B cell (primary cell): ENCODE measurements at regions of chr14 and their contacts with region 1.

Region 1: GRCh38 chr14:67571272-67571850 is 28.7 kb downstream of the PIGH start:
- DNase-seq: peak; percentile 80
- ATAC-seq: peak; percentile 89
- H3K4me3 ChIP-seq: no peak overlapping the region
- H3K4me3 Mint-ChIP-seq: no peak overlapping the region
- H3K27ac ChIP-seq: no peak overlapping the region
- H3K27ac Mint-ChIP-seq: peak overlapping the region; percentile 1
- H3K4me1 ChIP-seq: no peaks in the 10 kb centered on the region
- H3K4me1 Mint-ChIP-seq: no peaks in the 10 kb centered on the region
- H3K27me3 ChIP-seq: no peaks in the 10 kb centered on the region
- H3K27me3 Mint-ChIP-seq: peaks cover 5% of the 10 kb centered on the region
- CTCF ChIP-seq: peak; percentile 83

Region 2: GRCh38 chr14:67335781-67336180 is 235.6 kb before region 1 on chr14:
- CTCF ChIA-PET with region 1: no interaction called
- POLR2A ChIA-PET with region 1: no interaction called
- intact Hi-C with region 1: no loop called
- DNase-seq: peak; percentile 31
- ATAC-seq: no peak
- H3K4me3 ChIP-seq: no peak overlapping the region
- H3K4me3 Mint-ChIP-seq: no peak overlapping the region
- H3K27ac ChIP-seq: no peak overlapping the region
- H3K27ac Mint-ChIP-seq: no peak overlapping the region
- H3K4me1 ChIP-seq: no peaks in the 10 kb centered on the region
- H3K4me1 Mint-ChIP-seq: no peaks in the 10 kb centered on the region
- H3K27me3 ChIP-seq: no peaks in the 10 kb centered on the region
- H3K27me3 Mint-ChIP-seq: no peaks in the 10 kb centered on the region
- CTCF ChIP-seq: peak; percentile 51

Region 3: DNA sequence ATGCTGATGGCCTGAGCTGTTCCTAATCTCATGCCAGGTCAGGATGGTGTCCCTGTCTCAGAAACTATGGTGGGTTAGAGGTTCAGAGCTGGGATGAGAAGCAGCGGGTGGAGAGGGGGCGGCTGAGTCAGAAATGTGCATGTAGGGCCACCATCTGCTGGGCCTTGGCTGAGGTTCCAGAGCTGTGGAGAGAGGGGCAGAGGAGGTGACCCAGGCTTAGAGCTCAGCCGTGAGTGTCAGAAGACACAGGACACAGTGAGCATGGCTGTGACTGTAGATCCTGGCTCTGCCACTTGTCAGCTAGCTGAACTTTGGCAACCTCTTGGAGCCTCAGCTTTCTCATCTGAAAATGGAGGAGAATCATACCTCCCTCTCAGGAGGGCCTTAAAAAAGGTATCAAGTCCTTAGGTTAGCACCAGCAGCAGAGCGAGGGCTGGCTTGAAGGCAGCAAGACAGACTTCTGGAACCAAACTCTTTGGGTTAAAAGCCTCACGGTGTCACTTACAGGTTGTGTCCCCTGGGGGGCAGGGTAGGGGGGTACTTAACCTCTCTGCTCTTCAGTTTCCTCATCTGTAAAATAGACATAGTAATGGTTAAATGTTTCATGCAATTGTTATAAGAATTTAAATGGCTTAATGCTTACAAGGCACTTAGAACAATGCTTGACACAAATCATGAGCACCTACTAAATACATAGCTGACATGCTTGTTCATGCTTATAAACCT is 117.6 kb before region 1 on chr14:
- CTCF ChIA-PET with region 1: interaction called, 14 read pairs
- POLR2A ChIA-PET with region 1: no interaction called
- intact Hi-C with region 1: no loop called
- DNase-seq: no peak
- ATAC-seq: no peak
- H3K4me3 ChIP-seq: no peak overlapping the region
- H3K4me3 Mint-ChIP-seq: no peak overlapping the region
- H3K27ac ChIP-seq: no peak overlapping the region
- H3K27ac Mint-ChIP-seq: no peak overlapping the region
- H3K4me1 ChIP-seq: no peaks in the 10 kb centered on the region
- H3K4me1 Mint-ChIP-seq: no peaks in the 10 kb centered on the region
- H3K27me3 ChIP-seq: no peaks in the 10 kb centered on the region
- H3K27me3 Mint-ChIP-seq: peaks cover 11% of the 10 kb centered on the region
- CTCF ChIP-seq: no peak

Region 4: DNA sequence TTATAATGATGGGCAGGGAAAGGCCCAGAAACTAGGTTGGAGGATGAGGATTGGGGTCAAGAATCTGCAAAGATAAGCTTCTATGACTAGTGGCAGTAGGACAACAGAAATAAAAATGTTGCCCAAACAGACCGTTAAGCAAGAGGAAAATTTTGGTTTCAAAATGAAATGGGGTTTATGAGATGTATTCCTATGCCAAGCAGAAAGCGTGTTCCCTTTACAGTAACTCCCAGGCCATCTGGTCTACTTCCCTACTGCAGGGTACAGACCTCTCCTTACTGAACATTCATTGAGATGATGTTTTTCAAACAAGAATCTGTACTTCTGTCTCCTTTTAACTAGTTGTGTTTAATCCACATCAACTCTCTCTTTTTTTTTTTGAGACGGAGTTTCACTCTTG is 62.4 kb before region 1 on chr14:
- CTCF ChIA-PET with region 1: interaction called, 17 read pairs
- POLR2A ChIA-PET with region 1: no interaction called
- intact Hi-C with region 1: no loop called
- DNase-seq: no peak
- ATAC-seq: no peak
- H3K4me3 ChIP-seq: no peak overlapping the region
- H3K4me3 Mint-ChIP-seq: no peak overlapping the region
- H3K27ac ChIP-seq: no peak overlapping the region
- H3K27ac Mint-ChIP-seq: no peak overlapping the region
- H3K4me1 ChIP-seq: peaks cover 15 to 16% of the 10 kb centered on the region in 2 donors
- H3K4me1 Mint-ChIP-seq: peaks cover 27% of the 10 kb centered on the region
- H3K27me3 ChIP-seq: no peaks in the 10 kb centered on the region
- H3K27me3 Mint-ChIP-seq: no peaks in the 10 kb centered on the region
- CTCF ChIP-seq: no peak

Region 5: DNA sequence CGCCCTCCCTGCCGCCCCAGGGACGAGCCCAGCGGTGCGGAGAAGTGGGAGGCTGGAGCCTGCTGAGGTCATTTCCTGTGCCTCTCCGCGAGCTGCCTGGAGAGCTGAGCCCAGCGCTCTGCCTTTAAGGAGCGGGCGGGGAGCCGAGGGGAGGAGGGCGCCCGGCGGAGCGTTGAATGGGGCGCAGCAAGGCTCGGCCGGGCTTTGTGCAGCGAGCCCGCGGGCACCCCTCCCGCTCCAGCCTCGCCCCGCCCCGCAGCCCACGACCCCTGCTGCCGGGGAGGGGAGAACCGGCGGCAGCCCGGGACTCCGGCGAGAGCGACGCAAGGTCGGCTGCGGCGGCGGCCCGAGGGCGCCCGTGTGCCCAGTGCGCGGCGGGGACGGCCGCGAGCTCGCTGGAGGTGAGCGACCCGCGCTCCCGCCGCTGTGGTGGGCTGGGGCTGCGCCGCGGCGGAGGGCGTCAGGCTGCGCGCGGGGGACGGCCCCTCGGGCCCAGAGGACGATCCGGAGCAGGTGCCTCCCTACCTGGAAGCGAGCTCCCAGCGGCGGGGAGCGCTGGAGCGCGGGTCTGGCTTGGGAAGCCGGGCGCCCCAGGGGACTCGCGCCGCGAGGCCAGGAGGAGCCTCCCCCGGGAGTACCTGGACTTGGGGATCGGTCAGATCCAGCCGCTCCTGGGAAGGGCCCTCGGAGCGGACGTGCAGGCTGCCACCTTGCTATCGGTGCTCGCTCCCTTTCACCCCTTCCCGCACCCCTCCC is 38.2 kb before region 1 on chr14 and contains the start of gene PLEKHH1:
- CTCF ChIA-PET with region 1: interaction called, 65 read pairs
- POLR2A ChIA-PET with region 1: no interaction called
- intact Hi-C with region 1: no loop called
- DNase-seq: peak; percentile 51
- ATAC-seq: peak; percentile 71
- H3K4me3 ChIP-seq: peak within 1 kb of the TSS in 4 of 5 experiments; percentile 22 to 66 (median 54)
- H3K4me3 Mint-ChIP-seq: peak within 1 kb of the TSS; percentile 76
- H3K27ac ChIP-seq: no peak within 1 kb of the TSS
- H3K27ac Mint-ChIP-seq: no peak within 1 kb of the TSS
- H3K4me1 ChIP-seq: peaks cover 18 to 20% of the 10 kb centered on the region in 2 donors
- H3K4me1 Mint-ChIP-seq: peaks cover 5% of the 10 kb centered on the region
- H3K27me3 ChIP-seq: peaks cover 0 to 47% (median 18%) of the 10 kb centered on the region in 4 experiments
- H3K27me3 Mint-ChIP-seq: peaks cover 46% of the 10 kb centered on the region
- CTCF ChIP-seq: no peak
- total RNA-seq, gene PLEKHH1: 0.15 and 0.17 TPM in 2 replicates

Region 6: DNA sequence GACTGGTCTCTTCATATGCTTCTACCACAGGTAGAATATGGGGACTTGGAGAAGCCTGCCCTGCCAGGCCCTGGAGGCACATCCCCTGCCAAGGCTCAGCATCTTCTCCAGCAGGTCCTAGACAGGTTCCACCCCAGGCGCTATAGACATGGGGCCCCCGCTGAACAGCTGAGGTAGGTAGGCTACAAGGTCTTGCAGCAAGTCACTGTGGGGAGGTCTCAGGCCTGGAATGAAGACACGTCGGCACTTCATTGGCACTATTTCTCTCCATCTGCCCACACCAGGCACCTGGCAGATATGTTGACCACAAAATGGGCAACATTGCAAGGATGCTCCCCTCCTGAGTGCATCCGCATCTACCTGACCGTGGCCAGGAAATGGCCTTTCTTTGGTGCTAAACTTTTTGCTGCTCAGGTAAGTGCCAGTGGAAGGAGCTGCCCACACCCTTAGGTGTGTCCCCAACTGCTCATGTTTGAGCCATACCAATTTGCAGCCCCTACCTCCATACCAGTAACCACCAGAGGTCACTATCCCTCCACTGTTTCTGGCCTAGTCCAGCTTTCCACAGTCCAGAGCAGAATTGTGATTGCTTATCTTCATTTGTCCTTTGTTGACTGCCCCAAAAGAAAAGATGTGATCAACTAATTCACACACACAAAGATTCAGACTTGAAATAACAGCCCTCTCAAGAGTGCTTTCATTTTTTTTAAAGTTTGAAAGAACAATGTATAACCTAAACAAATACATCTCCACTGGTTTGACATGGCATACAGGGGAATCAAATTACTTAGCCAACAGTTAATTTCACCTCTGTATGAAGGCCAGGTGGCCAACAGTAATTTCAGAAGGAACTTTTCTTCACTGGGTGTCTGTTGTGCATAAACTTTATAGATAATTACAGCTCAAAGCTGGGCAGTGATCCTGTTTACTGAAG is 12.6 kb after region 1 on chr14:
- CTCF ChIA-PET with region 1: interaction called, 49 read pairs
- POLR2A ChIA-PET with region 1: no interaction called
- intact Hi-C with region 1: no loop called
- DNase-seq: peak; percentile 76
- ATAC-seq: peak; percentile 80
- H3K4me3 ChIP-seq: no peak overlapping the region
- H3K4me3 Mint-ChIP-seq: no peak overlapping the region
- H3K27ac ChIP-seq: no peak overlapping the region
- H3K27ac Mint-ChIP-seq: no peak overlapping the region
- H3K4me1 ChIP-seq: no peaks in the 10 kb centered on the region
- H3K4me1 Mint-ChIP-seq: peaks cover 6% of the 10 kb centered on the region
- H3K27me3 ChIP-seq: no peaks in the 10 kb centered on the region
- H3K27me3 Mint-ChIP-seq: no peaks in the 10 kb centered on the region
- CTCF ChIP-seq: peak; percentile 85

Region 7: GRCh38 chr14:68476212-68476907 is 905.0 kb after region 1 on chr14:
- CTCF ChIA-PET with region 1: no interaction called
- POLR2A ChIA-PET with region 1: no interaction called
- intact Hi-C with region 1: no loop called
- DNase-seq: peak; percentile 89
- ATAC-seq: peak; percentile 90
- H3K4me3 ChIP-seq: peak overlapping the region in 1 of 5 experiments; percentile 21
- H3K4me3 Mint-ChIP-seq: peak overlapping the region; percentile 72
- H3K27ac ChIP-seq: peak overlapping the region; percentile 95 to 99
- H3K27ac Mint-ChIP-seq: peak overlapping the region; percentile 98
- H3K4me1 ChIP-seq: peaks cover 73 to 77% of the 10 kb centered on the region in 2 donors
- H3K4me1 Mint-ChIP-seq: peaks cover 84% of the 10 kb centered on the region
- H3K27me3 ChIP-seq: no peaks in the 10 kb centered on the region
- H3K27me3 Mint-ChIP-seq: no peaks in the 10 kb centered on the region
- CTCF ChIP-seq: no peak